ENCODE measurements at regions of chr2 and their contacts with region 1.

Region 1: GRCh38 chr2:169141713-169142352 is 72.5 kb downstream of the DHRS9 start:
- DNase-seq: peak in 34 of 35 experiments; percentile 3 to 77 (median 44)
- ATAC-seq: peak; percentile 47 to 58 (median 48)
- H3K4me3 ChIP-seq: no peak overlapping the region
- H3K4me3 Mint-ChIP-seq: no peak overlapping the region
- H3K27ac ChIP-seq: no peak overlapping the region
- H3K27ac Mint-ChIP-seq: no peak overlapping the region
- H3K4me1 ChIP-seq: no peaks in the 10 kb centered on the region
- H3K4me1 Mint-ChIP-seq: peaks cover 0 to 3% (median 0%) of the 10 kb centered on the region in 3 donors
- H3K27me3 ChIP-seq: no peaks in the 10 kb centered on the region
- H3K27me3 Mint-ChIP-seq: no peaks in the 10 kb centered on the region

Region 2: DNA sequence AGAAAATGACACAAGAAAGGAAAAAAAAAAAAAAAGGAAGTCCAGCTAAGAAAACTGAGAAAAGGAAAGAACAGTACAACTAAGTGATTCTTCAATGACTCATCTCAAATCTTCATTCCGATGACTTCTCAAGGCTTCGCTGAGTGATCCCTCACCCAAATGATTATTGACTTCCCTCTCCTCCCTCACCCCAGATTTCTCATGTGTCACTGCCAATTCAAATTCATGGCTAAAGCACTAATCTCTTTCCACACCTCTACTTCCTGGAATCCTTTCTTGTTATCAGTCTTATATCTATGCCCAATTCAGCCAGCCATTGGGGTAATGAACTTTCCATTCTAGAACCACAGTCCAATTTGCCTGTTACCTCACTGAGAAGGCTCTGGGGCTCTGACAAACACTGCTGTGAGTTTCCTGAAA is 103.5 kb before region 1 on chr2:
- CTCF ChIA-PET with region 1: no interaction called
- POLR2A ChIA-PET with region 1: no interaction called
- DNase-seq: no peak
- ATAC-seq: no peak
- H3K4me3 ChIP-seq: no peak overlapping the region
- H3K4me3 Mint-ChIP-seq: no peak overlapping the region
- H3K27ac ChIP-seq: no peak overlapping the region
- H3K27ac Mint-ChIP-seq: no peak overlapping the region
- H3K4me1 ChIP-seq: no peaks in the 10 kb centered on the region
- H3K4me1 Mint-ChIP-seq: peaks cover 7 to 16% (median 16%) of the 10 kb centered on the region in 3 donors
- H3K27me3 ChIP-seq: no peaks in the 10 kb centered on the region
- H3K27me3 Mint-ChIP-seq: no peaks in the 10 kb centered on the region

Region 3: DNA sequence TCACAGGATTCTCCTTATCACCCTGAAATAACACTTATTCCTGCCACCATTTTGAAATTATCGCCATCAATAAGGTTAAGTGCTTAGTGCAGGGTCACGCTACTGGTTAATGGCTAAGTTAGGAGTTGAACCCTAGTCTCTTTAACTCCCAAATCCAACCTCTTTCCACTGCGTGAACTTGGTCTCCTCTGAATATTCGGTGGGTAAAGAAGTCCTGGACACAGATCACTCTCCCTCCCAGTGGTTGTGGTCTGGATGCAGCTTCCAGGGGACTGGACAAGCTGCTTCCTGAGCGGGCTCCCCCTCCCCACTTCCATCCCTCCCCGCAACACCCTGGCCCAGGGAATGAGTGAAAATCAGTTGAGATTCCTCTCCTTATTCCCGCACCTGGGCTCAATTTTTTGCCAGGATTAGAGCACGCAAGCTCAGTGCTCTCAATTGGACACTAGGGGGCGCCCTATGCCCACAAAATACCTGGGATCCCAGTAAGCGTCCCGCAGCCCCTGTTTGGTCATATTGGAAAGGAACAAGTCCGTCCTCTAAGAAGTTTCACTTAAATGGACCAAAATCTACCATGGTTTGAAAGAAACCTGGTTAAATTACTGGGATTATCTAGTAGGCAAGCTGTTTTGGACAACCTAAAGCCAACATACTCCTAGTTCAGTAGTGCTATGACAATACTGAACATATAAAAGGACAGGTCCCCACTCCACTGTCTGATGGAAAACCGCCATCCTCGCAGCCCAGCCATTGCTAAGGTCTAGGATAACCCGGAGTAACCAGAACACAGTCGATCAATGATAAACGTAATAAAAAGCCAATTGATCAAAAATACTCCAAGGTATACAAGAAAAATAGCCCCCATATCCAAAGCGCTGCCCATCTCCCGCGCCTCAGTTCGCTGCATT is 32.1 kb before region 1 on chr2:
- CTCF ChIA-PET with region 1: interaction called, 78 to 110 read pairs
- POLR2A ChIA-PET with region 1: interaction called in 1 of 2 experiments, 3 read pairs
- DNase-seq: peak; percentile 17 to 85 (median 63)
- ATAC-seq: peak in 1 of 4 experiments; percentile 37
- H3K4me3 ChIP-seq: no peak overlapping the region
- H3K4me3 Mint-ChIP-seq: no peak overlapping the region
- H3K27ac ChIP-seq: no peak overlapping the region
- H3K27ac Mint-ChIP-seq: no peak overlapping the region
- H3K4me1 ChIP-seq: peaks cover 35 to 36% of the 10 kb centered on the region in 2 experiments
- H3K4me1 Mint-ChIP-seq: peaks cover 45 to 55% (median 45%) of the 10 kb centered on the region in 3 donors
- H3K27me3 ChIP-seq: peaks cover 0 to 5% of the 10 kb centered on the region in 2 experiments
- H3K27me3 Mint-ChIP-seq: peaks cover 0 to 7% of the 10 kb centered on the region in 2 donors

Region 4: GRCh38 chr2:169670215-169670651 is 528.4 kb after region 1 on chr2:
- CTCF ChIA-PET with region 1: no interaction called
- POLR2A ChIA-PET with region 1: no interaction called
- DNase-seq: no peak
- ATAC-seq: no peak
- H3K4me3 ChIP-seq: no peak overlapping the region
- H3K4me3 Mint-ChIP-seq: no peak overlapping the region
- H3K27ac ChIP-seq: no peak overlapping the region
- H3K27ac Mint-ChIP-seq: no peak overlapping the region
- H3K4me1 ChIP-seq: no peaks in the 10 kb centered on the region
- H3K4me1 Mint-ChIP-seq: no peaks in the 10 kb centered on the region
- H3K27me3 ChIP-seq: peaks cover 0 to 8% of the 10 kb centered on the region in 2 experiments
- H3K27me3 Mint-ChIP-seq: peaks cover 0 to 4% of the 10 kb centered on the region in 2 donors

Measured in T-cell (primary cell).